ENCODE measurements at regions of chr15 and their contacts with region 1.

Region 1: GRCh38 chr15:92714477-92715401 is 59.2 kb upstream of the FAM174B start:
- DNase-seq: peak; percentile 61 to 78
- ATAC-seq: peak; percentile 87 to 95 (median 90)
- H3K4me3 ChIP-seq: peak overlapping the region; percentile 71
- H3K27ac ChIP-seq: peak overlapping the region; percentile 28
- H3K4me1 ChIP-seq: no peaks in the 10 kb centered on the region
- H3K27me3 ChIP-seq: no peaks in the 10 kb centered on the region
- CTCF ChIP-seq: peak; percentile 92

Region 2: DNA sequence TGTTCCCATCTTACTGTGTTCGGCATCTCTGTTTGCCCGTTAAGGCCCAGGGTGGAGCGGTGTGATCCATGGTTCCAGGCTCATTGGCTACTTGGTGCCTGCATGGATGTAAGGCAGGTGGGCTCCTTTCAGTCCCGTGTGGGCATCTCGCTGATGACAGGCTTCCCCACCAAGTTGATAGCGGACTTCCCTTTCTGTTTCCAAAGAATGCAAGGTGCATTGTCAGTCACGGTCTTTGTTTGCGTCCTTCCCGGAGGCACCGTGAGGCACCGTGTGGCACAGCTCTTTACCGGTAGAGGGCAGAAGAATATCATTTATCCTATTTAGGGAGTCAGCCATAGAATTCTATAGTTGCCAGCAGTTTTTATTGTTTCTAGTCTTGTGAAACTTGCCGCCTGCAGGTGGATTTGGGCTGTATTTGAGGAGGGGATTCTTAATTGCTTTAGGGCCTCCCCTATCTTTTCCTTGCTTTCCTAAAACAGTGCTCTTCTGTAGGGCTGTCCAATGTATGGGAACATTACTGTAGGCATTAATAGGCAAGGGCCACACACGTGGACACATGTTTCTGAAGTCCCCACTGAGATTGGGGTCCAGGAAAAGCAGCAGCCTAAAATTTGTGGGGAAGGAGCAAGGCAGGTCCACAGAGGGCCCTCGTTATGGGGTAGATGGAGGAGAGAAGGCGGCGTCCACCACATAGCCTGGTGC is 617.1 kb before region 1 on chr15:
- intact Hi-C with region 1: loop called (anchors 5 kb)
- DNase-seq: no peak
- ATAC-seq: peak; percentile 72 to 88 (median 77)
- H3K4me3 ChIP-seq: no peak overlapping the region
- H3K27ac ChIP-seq: no peak overlapping the region
- H3K4me1 ChIP-seq: peaks cover 5% of the 10 kb centered on the region
- H3K27me3 ChIP-seq: no peaks in the 10 kb centered on the region
- CTCF ChIP-seq: peak; percentile 73

Region 3: GRCh38 chr15:92277776-92278175 is 437.0 kb before region 1 on chr15:
- intact Hi-C with region 1: loop called in 1 of 2 experiments (anchors 5 kb)
- DNase-seq: no peak
- ATAC-seq: no peak
- H3K4me3 ChIP-seq: no peak overlapping the region
- H3K27ac ChIP-seq: no peak overlapping the region
- H3K4me1 ChIP-seq: no peaks in the 10 kb centered on the region
- H3K27me3 ChIP-seq: peaks cover 0 to 2% (median 0%) of the 10 kb centered on the region in 3 donors
- CTCF ChIP-seq: peak; percentile 13

Region 4: DNA sequence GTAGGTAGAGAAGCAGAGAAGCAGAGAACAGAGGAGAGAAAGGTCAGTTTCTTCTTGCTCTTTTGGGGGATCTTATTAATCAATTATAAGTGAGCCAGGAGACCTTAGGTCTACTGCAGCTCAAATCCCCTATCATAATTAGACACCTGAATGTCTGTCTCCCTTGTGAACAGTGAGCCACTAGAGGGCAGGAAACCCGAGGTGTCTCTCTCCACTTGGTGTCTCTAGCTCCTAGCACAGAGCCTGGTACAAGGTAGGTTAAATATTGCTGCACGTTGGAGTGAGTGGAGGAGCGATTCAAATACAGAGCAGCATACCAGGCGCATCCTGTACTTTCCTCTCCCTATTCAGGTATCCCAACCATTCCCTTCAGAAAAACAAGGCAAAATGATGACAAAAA is 323.1 kb before region 1 on chr15:
- intact Hi-C with region 1: loop called in 1 of 2 experiments (anchors 10 kb)
- DNase-seq: no peak
- ATAC-seq: peak; percentile 63 to 78 (median 72)
- H3K4me3 ChIP-seq: no peak overlapping the region
- H3K27ac ChIP-seq: no peak overlapping the region
- H3K4me1 ChIP-seq: no peaks in the 10 kb centered on the region
- H3K27me3 ChIP-seq: peaks cover 0 to 80% (median 14%) of the 10 kb centered on the region in 3 donors
- CTCF ChIP-seq: peak; percentile 34

Region 5: GRCh38 chr15:92521624-92522008 is 193.1 kb before region 1 on chr15:
- intact Hi-C with region 1: loop called (anchors 2 kb)
- DNase-seq: peak; percentile 67 to 78
- ATAC-seq: peak; percentile 90 to 98 (median 95)
- H3K4me3 ChIP-seq: no peak overlapping the region
- H3K27ac ChIP-seq: no peak overlapping the region
- H3K4me1 ChIP-seq: peaks cover 20% of the 10 kb centered on the region
- H3K27me3 ChIP-seq: no peaks in the 10 kb centered on the region
- CTCF ChIP-seq: peak; percentile 87

Region 6: DNA sequence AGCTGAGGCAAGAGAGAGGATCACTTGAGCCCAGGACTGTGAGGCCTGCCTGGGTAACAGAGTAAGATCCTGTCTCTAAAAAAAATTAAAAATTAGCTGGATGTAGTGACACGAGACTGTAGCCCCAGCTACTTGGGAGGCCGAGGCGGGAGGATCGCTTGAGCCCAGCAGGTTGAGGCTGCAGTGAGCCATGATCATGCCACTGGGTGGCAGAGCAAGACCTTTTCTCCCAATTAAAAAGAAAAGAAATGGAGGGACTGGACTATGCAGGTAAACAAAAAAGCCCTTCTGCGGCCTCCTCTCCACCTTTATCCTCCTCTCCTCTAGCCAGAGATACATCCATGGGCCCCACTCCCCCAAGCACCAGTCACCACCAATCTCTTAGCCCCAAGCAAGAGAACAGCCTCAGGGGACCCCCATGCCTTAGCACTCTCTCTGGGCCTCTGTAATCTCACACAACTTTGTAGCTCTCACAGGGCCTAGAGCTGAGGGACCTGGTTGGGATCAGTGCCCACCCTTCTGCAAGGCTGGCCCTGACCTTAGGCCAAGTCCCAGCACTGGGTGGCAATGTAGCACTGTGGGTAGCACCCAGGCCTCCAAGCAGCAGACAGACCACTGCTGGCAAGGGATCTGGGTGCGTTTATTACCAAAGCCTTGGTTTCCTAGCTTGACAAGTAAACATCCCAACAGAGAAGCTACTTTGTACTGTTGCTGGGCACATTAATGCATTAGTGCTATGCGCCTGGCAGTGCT is 102.6 kb before region 1 on chr15:
- intact Hi-C with region 1: loop called in 1 of 2 experiments (anchors 5 kb)
- DNase-seq: no peak
- ATAC-seq: peak in 3 of 4 donors; percentile 34 to 51 (median 43)
- H3K4me3 ChIP-seq: no peak overlapping the region
- H3K27ac ChIP-seq: no peak overlapping the region
- H3K4me1 ChIP-seq: peaks cover 1% of the 10 kb centered on the region
- H3K27me3 ChIP-seq: no peaks in the 10 kb centered on the region
- CTCF ChIP-seq: no peak

Region 7: GRCh38 chr15:92693691-92694331 is 20.9 kb before region 1 on chr15:
- intact Hi-C with region 1: no loop called
- DNase-seq: no peak
- ATAC-seq: peak in 1 of 4 donors; percentile 40
- H3K4me3 ChIP-seq: no peak overlapping the region
- H3K27ac ChIP-seq: no peak overlapping the region
- H3K4me1 ChIP-seq: no peaks in the 10 kb centered on the region
- H3K27me3 ChIP-seq: no peaks in the 10 kb centered on the region
- CTCF ChIP-seq: no peak

Region 8: DNA sequence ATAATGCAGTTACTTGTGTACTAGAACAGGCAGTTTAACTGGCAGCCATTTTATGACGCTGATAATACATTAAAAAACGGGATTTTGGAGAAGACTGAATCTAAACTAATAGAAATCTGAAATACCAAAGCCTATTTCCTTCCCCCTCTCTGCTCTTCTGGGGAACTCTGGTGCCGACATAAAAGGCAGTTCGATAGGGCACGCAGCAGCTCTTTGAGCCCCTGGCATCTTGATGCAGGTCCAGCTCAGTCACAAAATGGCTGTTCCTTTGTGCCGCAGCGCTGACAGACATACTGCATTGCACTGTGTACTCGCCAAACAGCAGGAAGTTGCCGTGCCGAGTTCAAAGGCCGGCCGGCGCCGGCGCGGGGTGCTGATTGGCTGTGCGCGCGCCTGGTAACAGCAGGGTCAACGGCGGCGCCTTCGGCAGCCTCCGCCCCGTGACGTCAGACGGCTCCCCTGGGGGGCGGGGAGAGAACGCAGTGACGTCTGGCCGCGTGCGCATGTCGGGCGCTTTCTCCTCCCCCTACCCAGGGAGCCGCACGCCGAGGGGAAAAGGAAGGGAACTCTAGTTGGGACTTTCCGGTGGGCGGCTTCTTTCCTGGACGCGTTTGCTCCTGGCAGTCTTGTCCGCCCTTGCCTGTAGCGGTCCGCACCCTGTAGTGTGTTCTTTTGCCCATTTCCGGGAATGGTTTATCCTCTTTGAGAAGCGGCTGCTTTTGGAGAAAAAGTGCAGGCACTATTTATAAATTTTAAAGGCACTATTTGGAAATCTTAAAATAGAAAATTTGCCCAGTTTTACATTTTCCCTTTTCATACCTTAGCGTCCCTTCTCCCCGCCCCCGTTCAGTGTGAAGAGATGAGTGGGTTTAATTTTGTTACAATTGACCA is 189.4 kb after region 1 on chr15:
- intact Hi-C with region 1: no loop called
- DNase-seq: peak; percentile 99 to 100
- ATAC-seq: peak; percentile 86 to 95 (median 90)
- H3K4me3 ChIP-seq: peak overlapping the region; percentile 68
- H3K27ac ChIP-seq: peak overlapping the region; percentile 95
- H3K4me1 ChIP-seq: peaks cover 40% of the 10 kb centered on the region
- H3K27me3 ChIP-seq: no peaks in the 10 kb centered on the region
- CTCF ChIP-seq: no peak